Transverse colon (tissue), 4 donors: ENCODE measurements at regions of chr12 and their contacts with region 1.

Region 1: GRCh38 chr12:73731658-73732057 is 806.0 kb upstream of the ATXN7L3B start:
- DNase-seq: no peak
- H3K4me3 ChIP-seq: no peak overlapping the region
- H3K27ac ChIP-seq: no peak overlapping the region
- H3K4me1 ChIP-seq: no peaks in the 10 kb centered on the region
- H3K27me3 ChIP-seq: no peaks in the 10 kb centered on the region
- CTCF ChIP-seq: no peak
- EP300 ChIP-seq: no peak
- POLR2A ChIP-seq: no peak

Region 2: DNA sequence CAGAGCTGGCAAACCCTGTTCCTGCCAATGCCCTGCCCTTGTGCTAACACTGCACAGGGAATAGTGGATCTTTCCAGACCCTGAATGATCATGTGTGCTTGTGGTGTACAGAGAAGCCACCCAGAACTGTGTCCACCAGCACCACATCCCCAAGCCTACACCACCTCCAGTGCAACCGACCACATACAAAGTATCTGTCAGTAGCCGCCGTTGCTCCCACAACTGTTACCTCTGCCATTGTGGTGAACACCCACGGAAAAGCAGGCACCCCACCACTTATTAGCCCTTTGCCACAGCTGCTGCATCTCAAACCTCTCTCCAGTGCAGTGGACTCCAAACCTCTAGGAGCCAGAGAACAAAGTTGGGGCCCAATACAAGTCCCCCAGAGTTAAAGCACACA is 409.9 kb before region 1 on chr12:
- in situ Hi-C with region 1: no loop called
- intact Hi-C with region 1: loop called (anchors 5 kb)
- DNase-seq: no peak
- H3K4me3 ChIP-seq: no peak overlapping the region
- H3K27ac ChIP-seq: no peak overlapping the region
- H3K4me1 ChIP-seq: no peaks in the 10 kb centered on the region
- H3K27me3 ChIP-seq: no peaks in the 10 kb centered on the region
- CTCF ChIP-seq: no peak
- EP300 ChIP-seq: no peak
- POLR2A ChIP-seq: no peak

Region 3: GRCh38 chr12:75154388-75154787 is 1422.7 kb after region 1 on chr12:
- in situ Hi-C with region 1: no loop called
- intact Hi-C with region 1: no loop called
- DNase-seq: no peak
- H3K4me3 ChIP-seq: no peak overlapping the region
- H3K27ac ChIP-seq: no peak overlapping the region
- H3K4me1 ChIP-seq: no peaks in the 10 kb centered on the region
- H3K27me3 ChIP-seq: no peaks in the 10 kb centered on the region
- CTCF ChIP-seq: no peak
- EP300 ChIP-seq: no peak
- POLR2A ChIP-seq: no peak